Panc1 (cell line): ENCODE measurements at regions of chr1 and their contacts with region 1.

Region 1: DNA sequence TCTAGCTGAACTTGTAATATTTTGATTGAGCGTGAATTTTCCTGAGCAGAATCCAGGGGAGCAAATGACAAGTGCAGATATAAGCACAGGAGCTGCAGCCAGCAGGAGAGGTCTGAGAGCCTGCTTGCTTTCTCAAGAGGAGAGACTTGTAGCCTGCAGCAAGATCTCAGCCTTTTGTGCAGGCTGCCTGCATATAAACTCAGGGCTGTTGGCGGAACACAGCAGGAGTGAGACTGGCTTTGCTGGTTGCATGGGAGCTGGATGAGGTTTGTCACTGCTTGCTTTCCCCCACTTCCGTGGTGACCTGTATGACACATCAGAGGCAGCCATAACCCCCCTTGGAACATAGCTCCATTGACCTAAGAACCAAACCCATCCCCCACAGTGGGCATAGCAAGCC is 725.4 kb upstream of the RGS18 start:
- DNase-seq: no peak
- ATAC-seq: no peak
- H3K4me3 ChIP-seq: no peak overlapping the region
- H3K27ac ChIP-seq: no peak overlapping the region
- H3K4me1 ChIP-seq: no peaks in the 10 kb centered on the region
- H3K27me3 ChIP-seq: no peaks in the 10 kb centered on the region
- CTCF ChIP-seq: no peak

Region 2: DNA sequence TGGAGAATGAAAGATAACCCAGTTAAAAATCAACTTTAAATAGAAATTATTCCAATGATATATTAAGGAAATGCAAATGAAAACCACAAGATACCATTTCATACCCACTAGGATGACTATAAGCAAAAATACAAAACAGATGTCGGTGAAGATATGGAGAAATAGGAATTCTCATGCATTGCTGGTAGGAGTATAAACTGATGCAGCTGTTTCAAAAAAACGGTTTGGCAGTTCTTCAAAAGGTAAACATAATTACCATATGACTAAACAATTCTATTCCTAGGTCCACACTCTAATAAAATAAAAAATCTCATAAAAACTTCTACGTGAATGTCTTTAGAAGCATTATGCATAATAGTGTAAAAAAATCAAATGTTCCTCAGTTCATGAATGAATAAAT is 191.9 kb before region 1 on chr1:
- CTCF ChIA-PET with region 1: no interaction called
- POLR2A ChIA-PET with region 1: no interaction called
- in situ Hi-C with region 1: no loop called
- intact Hi-C with region 1: no loop called
- DNase-seq: no peak
- ATAC-seq: no peak
- H3K4me3 ChIP-seq: no peak overlapping the region
- H3K27ac ChIP-seq: no peak overlapping the region
- H3K4me1 ChIP-seq: no peaks in the 10 kb centered on the region
- H3K27me3 ChIP-seq: no peaks in the 10 kb centered on the region
- CTCF ChIP-seq: no peak

Region 3: DNA sequence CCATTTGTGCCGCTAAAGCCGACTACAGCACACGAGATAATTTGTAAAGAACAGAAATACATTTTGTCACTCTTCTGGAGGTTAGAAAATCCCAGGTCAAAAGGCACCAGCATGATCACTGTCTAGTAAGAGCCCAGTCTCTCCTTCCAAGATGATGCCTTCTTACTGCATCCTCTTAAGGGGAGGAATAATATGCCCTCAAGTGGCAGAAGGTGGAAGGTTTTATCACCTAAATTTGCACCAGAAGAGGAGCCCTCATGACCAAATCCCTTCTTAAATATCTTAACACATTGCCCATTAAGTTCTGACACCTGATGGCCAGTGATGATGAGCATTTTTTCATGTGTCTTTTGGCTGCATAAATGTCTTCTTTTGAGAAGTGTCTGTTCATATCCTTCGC is 398.8 kb after region 1 on chr1:
- CTCF ChIA-PET with region 1: interaction called, 12 read pairs
- POLR2A ChIA-PET with region 1: no interaction called
- in situ Hi-C with region 1: no loop called
- intact Hi-C with region 1: no loop called
- DNase-seq: no peak
- ATAC-seq: no peak
- H3K4me3 ChIP-seq: no peak overlapping the region
- H3K27ac ChIP-seq: no peak overlapping the region
- H3K4me1 ChIP-seq: no peaks in the 10 kb centered on the region
- H3K27me3 ChIP-seq: no peaks in the 10 kb centered on the region
- CTCF ChIP-seq: no peak